ENCODE measurements at regions of chr21 and their contacts with region 1.

Region 1: DNA sequence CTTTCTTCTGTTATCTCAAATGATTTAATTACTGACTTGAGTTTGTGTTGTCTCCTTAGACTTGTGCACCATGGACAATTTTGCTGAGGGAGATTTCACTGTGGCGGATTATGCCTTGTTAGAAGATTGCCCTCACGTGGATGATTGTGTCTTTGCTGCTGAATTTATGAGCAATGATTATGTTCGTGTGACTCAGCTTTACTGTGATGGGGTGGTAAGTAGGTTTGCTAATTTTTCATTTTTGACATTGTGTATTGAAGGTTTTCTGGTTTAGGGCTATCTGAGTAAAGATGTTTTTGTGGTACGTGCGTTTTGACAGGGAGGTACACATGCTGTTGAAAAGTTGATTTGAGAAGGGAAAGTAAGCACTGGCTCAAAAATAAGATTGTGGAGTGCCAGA is 14.1 kb downstream of the TTC3 start:
- DNase-seq: peak in 2 of 14 experiments; percentile 22 to 28
- ATAC-seq: peak; percentile 55
- H3K4me3 ChIP-seq: no peak overlapping the region
- H3K4me3 Mint-ChIP-seq: no peak overlapping the region
- H3K27ac ChIP-seq: no peak overlapping the region
- H3K27ac Mint-ChIP-seq: no peak overlapping the region
- H3K4me1 ChIP-seq: peaks cover 3% of the 10 kb centered on the region
- H3K4me1 Mint-ChIP-seq: peaks cover 23% of the 10 kb centered on the region
- H3K27me3 ChIP-seq: no peaks in the 10 kb centered on the region
- H3K27me3 Mint-ChIP-seq: no peaks in the 10 kb centered on the region
- CTCF ChIP-seq: no peak

Region 2: GRCh38 chr21:37166733-37167132 is 79.5 kb after region 1 on chr21:
- CTCF ChIA-PET with region 1: no interaction called
- POLR2A ChIA-PET with region 1: no interaction called
- intact Hi-C with region 1: loop called in 1 of 2 experiments (anchors 10 kb)
- DNase-seq: peak in 3 of 14 experiments; percentile 21 to 29 (median 28)
- ATAC-seq: no peak
- H3K4me3 ChIP-seq: no peak overlapping the region
- H3K4me3 Mint-ChIP-seq: no peak overlapping the region
- H3K27ac ChIP-seq: no peak overlapping the region
- H3K27ac Mint-ChIP-seq: no peak overlapping the region
- H3K4me1 ChIP-seq: no peaks in the 10 kb centered on the region
- H3K4me1 Mint-ChIP-seq: peaks cover 4% of the 10 kb centered on the region
- H3K27me3 ChIP-seq: no peaks in the 10 kb centered on the region
- H3K27me3 Mint-ChIP-seq: no peaks in the 10 kb centered on the region
- CTCF ChIP-seq: no peak